Dendritic cell treated with granulocyte-macrophage colony-stimulating factor and Interleukin-4, amounts not matched to agents 40 ng/mL and 50 ng/mL, for 4 days (primary cell): ENCODE measurements at regions of chr12 and their contacts with region 1.

Region 1: DNA sequence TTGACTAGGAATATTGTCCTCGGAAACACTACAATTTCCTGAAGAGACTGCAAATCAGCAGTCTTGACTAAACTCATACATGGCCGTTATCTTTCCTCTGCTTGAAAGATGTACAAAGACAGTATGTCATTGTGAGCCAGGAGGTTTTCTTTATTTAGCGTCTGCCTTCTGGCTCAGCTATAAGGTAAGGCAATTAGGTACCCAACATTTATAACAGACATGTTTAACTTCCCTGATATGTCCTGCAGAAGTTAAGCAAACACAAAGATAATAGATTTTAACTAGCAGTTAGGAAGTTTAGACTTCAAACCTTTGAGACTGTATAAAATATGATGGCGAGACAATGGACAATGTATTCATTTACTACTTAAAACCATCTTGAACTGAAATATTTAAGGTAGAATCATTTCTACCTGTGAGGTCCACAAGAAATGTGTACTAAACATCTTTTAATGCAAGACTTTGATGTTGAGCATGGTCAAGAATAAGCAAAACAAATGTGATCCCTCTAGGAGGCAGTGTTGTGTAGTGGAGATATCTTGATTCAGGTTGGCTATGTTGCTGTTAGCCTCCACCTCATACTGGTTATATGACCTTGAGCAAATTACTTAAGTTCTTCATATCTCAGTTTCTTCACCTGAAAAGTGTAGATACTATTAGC is 96.2 kb upstream of the EEA1 start:
- H3K4me3 Mint-ChIP-seq: no peak overlapping the region
- H3K27ac Mint-ChIP-seq: no peak overlapping the region
- H3K4me1 Mint-ChIP-seq: no peaks in the 10 kb centered on the region
- H3K27me3 Mint-ChIP-seq: no peaks in the 10 kb centered on the region

Region 2: GRCh38 chr12:93397412-93397811 is 372.1 kb after region 1 on chr12:
- intact Hi-C with region 1: loop called (anchors 2 kb)
- H3K4me3 Mint-ChIP-seq: no peak overlapping the region
- H3K27ac Mint-ChIP-seq: no peak overlapping the region
- H3K4me1 Mint-ChIP-seq: no peaks in the 10 kb centered on the region
- H3K27me3 Mint-ChIP-seq: no peaks in the 10 kb centered on the region

Region 3: GRCh38 chr12:94169495-94169894 is 1144.2 kb after region 1 on chr12:
- intact Hi-C with region 1: no loop called
- H3K4me3 Mint-ChIP-seq: no peak overlapping the region
- H3K27ac Mint-ChIP-seq: no peak overlapping the region
- H3K4me1 Mint-ChIP-seq: peaks cover 60% of the 10 kb centered on the region
- H3K27me3 Mint-ChIP-seq: no peaks in the 10 kb centered on the region